Esophagus muscularis mucosa (tissue), 4 donors: ENCODE measurements at regions of chr11 and their contacts with region 1.

Region 1: DNA sequence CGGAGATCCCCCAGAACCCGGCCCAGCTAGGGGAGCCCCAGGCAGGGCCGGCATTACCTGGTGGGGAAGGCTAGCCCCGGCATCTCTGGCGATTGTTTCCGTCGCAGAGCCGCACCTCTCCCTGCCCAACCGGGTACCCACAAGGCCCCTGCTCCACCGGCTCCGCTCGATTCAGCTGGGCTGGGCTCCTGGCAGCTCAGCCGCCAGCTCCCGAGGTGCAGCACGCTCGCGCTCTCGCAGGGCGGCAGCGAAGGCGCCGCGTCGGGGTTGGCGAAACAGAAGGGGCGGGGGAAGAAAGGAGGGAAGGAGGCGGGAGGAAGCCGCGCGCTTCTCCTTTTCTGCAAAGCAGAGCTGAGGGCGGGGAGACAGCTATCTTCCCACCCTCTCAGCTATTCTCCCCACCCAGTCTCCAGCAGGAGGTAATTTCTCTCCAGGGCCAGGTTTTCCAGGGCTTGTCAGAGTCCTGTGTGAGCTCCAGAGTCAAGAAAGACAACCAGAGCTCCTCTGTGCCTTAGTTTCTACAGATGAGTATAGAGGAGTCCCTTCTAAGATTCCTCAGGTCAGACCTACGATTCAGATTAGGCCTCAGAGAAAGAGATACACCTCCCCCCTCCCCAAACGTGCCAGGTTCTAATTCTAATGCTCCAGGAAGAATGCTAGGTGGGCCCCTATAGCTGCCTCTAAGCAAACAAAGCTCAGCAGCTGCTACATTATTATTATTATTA is 62.0 kb downstream of the PAK1 start:
- DNase-seq: peak; percentile 96
- H3K4me3 ChIP-seq: peak overlapping the region; percentile 66 to 79 (median 70)
- H3K27ac ChIP-seq: peak overlapping the region; percentile 84 to 91 (median 90)
- H3K4me1 ChIP-seq: peaks cover 9 to 51% (median 42%) of the 10 kb centered on the region in 4 donors
- H3K27me3 ChIP-seq: no peaks in the 10 kb centered on the region
- CTCF ChIP-seq: peak in 1 of 3 experiments; percentile 17
- EP300 ChIP-seq: no peak
- POLR2A ChIP-seq: no peak

Region 2: GRCh38 chr11:77278595-77279506 is 133.0 kb before region 1 on chr11:
- intact Hi-C with region 1: no loop called
- DNase-seq: no peak
- H3K4me3 ChIP-seq: no peak overlapping the region
- H3K27ac ChIP-seq: no peak overlapping the region
- H3K4me1 ChIP-seq: no peaks in the 10 kb centered on the region
- H3K27me3 ChIP-seq: no peaks in the 10 kb centered on the region
- CTCF ChIP-seq: no peak
- EP300 ChIP-seq: no peak
- POLR2A ChIP-seq: no peak

Region 3: DNA sequence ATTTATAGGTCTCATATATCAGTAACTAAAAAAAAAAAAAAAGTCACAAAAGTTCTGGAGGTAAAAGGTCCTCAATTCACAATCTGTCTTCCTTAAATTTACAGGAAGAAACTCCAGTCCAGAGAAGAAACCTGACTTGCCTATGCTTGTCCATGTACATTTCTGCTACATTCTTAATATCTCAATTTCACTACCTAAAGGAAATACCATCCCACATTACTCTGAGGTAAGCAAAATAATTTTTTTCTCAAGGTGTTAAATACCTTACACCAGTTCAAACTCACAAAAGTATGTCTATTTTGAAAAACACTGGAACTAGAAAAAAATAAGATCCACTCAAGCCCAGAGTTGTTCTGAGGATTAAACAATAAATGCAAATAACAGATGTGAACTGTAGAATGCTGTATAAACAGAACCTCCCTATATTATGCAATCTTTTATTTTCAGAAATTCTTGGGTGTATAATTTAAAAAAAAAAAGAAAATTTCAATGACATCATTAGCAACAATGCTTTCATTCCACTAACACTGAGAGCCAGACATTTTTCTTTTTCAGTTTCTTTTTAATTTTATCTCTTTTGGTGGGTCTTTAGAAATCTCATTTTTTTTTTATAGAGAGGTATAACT is 60.5 kb before region 1 on chr11:
- intact Hi-C with region 1: loop called (anchors 10 kb)
- DNase-seq: no peak
- H3K4me3 ChIP-seq: no peak overlapping the region
- H3K27ac ChIP-seq: no peak overlapping the region
- H3K4me1 ChIP-seq: peaks cover 10 to 38% (median 31%) of the 10 kb centered on the region in 4 donors
- H3K27me3 ChIP-seq: no peaks in the 10 kb centered on the region
- CTCF ChIP-seq: no peak
- EP300 ChIP-seq: no peak
- POLR2A ChIP-seq: no peak

Region 4: DNA sequence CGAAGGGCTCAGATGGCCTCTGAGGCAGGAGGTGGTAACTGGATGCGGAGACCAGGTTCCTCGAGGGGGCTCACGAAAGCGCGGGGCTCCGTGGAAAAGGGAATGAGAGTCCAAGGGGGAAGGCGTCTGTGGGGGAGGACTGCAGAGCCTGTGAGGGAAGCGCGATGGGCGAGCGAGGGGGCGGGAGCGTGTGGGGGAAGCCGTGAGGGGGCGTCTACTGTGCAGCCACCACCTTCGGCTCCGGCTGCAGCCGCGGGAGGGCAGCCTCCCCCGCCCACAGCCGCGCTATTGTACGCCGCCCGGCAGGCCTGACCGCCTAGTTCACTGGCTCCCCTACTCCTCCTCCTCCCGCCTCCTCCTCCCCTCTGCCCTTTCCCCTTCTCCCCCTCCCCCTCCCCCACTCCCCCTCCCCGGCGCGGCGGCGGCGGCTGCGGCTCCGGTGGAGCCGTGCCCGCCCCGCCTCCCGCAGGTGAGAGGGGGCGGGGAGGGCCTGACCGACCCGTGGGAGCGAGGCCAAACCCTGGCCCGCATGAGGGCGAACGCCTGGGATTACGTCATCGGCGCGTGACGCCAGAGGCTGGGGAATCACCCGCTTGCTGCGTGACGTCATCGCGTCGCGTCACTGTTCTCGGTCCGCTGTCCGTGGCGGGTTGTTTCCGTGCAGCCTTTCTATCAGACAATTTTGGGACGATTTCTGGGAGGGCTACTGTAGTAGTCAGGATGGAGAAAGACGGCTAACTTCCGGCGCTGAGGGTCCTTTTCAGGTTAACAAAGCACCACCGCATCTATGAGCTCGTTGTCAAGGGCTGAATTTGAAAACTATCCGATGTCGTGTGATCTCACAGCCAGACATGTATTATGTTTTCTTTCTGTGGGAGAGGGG is 62.2 kb after region 1 on chr11 and contains the start of gene PAK1:
- intact Hi-C with region 1: loop called (anchors 5 kb)
- DNase-seq: peak; percentile 94
- H3K4me3 ChIP-seq: peak within 1 kb of the TSS; percentile 71 to 95 (median 90)
- H3K27ac ChIP-seq: peak within 1 kb of the TSS; percentile 71 to 89 (median 80)
- H3K4me1 ChIP-seq: peaks cover 7 to 29% (median 24%) of the 10 kb centered on the region in 4 donors
- H3K27me3 ChIP-seq: no peaks in the 10 kb centered on the region
- CTCF ChIP-seq: peak in 1 of 3 experiments; percentile 35
- EP300 ChIP-seq: no peak
- POLR2A ChIP-seq: no peak
- total RNA-seq, gene PAK1: 27.8 to 44.3 (median 36.2) TPM